CD4-positive, alpha-beta memory T cell (primary cell): ENCODE measurements at regions of chr17 and their contacts with region 1.

Region 1: GRCh38 chr17:48804925-48805411 is 12.1 kb downstream of the TTLL6 start:
- DNase-seq: peak; percentile 49 to 64 (median 55)
- H3K4me3 ChIP-seq: no peak overlapping the region
- H3K4me3 Mint-ChIP-seq: no peak overlapping the region
- H3K27ac ChIP-seq: no peak overlapping the region
- H3K27ac Mint-ChIP-seq: no peak overlapping the region
- H3K4me1 ChIP-seq: no peaks in the 10 kb centered on the region
- H3K4me1 Mint-ChIP-seq: no peaks in the 10 kb centered on the region
- H3K27me3 ChIP-seq: no peaks in the 10 kb centered on the region
- H3K27me3 Mint-ChIP-seq: peaks cover 0 to 10% of the 10 kb centered on the region in 2 donors

Region 2: DNA sequence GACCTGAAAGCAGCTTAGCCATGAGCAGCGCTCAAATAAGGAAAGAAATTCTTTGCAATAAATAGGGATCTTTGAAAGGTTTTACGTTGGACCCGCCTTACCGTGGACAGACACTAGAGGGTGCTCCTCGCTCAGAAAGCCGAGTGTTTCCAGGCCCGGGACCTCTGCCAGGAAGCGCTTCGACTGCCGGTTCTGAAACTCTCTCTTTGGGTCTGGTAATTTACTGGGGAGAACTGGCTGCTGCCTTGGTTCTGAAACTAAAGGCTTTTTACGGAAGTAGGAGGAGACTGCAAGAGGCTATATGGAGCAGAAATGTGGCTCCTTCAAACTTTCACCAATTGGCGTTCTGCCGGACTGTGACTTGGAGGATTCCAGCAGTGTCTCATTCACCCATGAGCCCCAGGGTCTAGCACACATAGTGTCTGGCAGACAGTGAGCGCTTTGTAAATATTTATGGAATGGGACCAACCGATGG is 133.2 kb before region 1 on chr17:
- CTCF ChIA-PET with region 1: interaction called, 3 read pairs
- POLR2A ChIA-PET with region 1: no interaction called
- intact Hi-C with region 1: loop called (anchors 2 kb)
- DNase-seq: peak; percentile 56 to 66 (median 60)
- H3K4me3 ChIP-seq: no peak overlapping the region
- H3K4me3 Mint-ChIP-seq: peak overlapping the region in 7 of 8 donors; percentile 17 to 78 (median 39)
- H3K27ac ChIP-seq: no peak overlapping the region
- H3K27ac Mint-ChIP-seq: no peak overlapping the region
- H3K4me1 ChIP-seq: no peaks in the 10 kb centered on the region
- H3K4me1 Mint-ChIP-seq: peaks cover 0 to 6% (median 3%) of the 10 kb centered on the region in 4 donors
- H3K27me3 ChIP-seq: no peaks in the 10 kb centered on the region
- H3K27me3 Mint-ChIP-seq: peaks cover 23 to 33% of the 10 kb centered on the region in 2 donors

Region 3: GRCh38 chr17:48767263-48767774 is 37.6 kb before region 1 on chr17:
- CTCF ChIA-PET with region 1: interaction called, 16 read pairs
- POLR2A ChIA-PET with region 1: no interaction called
- intact Hi-C with region 1: no loop called
- DNase-seq: no peak
- H3K4me3 ChIP-seq: no peak overlapping the region
- H3K4me3 Mint-ChIP-seq: no peak overlapping the region
- H3K27ac ChIP-seq: no peak overlapping the region
- H3K27ac Mint-ChIP-seq: no peak overlapping the region
- H3K4me1 ChIP-seq: no peaks in the 10 kb centered on the region
- H3K4me1 Mint-ChIP-seq: no peaks in the 10 kb centered on the region
- H3K27me3 ChIP-seq: no peaks in the 10 kb centered on the region
- H3K27me3 Mint-ChIP-seq: peaks cover 45 to 46% of the 10 kb centered on the region in 2 donors

Region 4: GRCh38 chr17:48791128-48792032 is 13.6 kb before region 1 on chr17:
- CTCF ChIA-PET with region 1: interaction called, 14 read pairs
- POLR2A ChIA-PET with region 1: no interaction called
- intact Hi-C with region 1: no loop called
- DNase-seq: peak in 1 of 5 donors; percentile 14
- H3K4me3 ChIP-seq: no peak overlapping the region
- H3K4me3 Mint-ChIP-seq: no peak overlapping the region
- H3K27ac ChIP-seq: no peak overlapping the region
- H3K27ac Mint-ChIP-seq: no peak overlapping the region
- H3K4me1 ChIP-seq: no peaks in the 10 kb centered on the region
- H3K4me1 Mint-ChIP-seq: no peaks in the 10 kb centered on the region
- H3K27me3 ChIP-seq: no peaks in the 10 kb centered on the region
- H3K27me3 Mint-ChIP-seq: peaks cover 23 to 49% of the 10 kb centered on the region in 2 donors

Region 5: DNA sequence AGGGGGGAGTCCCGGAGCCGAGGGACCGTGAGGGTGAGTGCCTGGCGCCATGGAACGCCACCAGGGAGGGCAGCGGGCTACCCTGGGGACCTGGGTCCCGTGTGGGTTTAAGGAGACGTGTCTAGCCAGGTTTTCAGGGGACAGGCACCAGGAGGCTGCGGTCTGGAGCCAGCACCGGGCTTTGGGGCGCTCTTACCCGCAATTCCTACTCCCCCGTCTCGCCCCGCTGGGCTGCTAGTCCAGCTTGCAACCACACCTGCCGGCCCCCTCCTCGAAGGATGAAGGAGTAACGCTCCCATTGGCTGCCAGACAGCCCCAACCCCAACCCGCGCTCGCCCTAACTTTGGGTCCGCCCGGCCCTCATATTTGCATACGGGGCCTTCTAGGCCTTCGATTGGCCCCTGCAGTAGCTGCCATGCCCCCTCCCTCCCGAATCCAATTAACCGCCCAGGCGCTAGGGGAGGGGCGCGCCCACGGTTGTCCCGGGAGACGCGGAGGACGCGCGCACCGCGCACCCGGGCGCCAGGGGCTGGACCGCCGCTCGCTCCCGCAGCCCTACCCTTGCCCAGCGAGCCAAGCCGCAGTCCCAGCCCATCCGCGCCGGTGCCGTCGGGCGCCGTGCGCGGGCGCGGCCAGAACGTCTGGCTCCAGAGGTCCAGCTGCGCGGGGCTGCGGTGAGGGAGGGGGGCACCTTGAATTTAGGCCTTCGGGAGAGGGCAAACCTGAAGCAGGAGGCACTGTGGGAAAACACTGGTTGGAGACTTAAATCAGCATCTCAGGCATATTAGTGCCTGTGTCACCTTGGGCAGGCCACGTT is 12.0 kb after region 1 on chr17 and contains the start of gene TTLL6:
- CTCF ChIA-PET with region 1: interaction called, 40 read pairs
- POLR2A ChIA-PET with region 1: no interaction called
- intact Hi-C with region 1: no loop called
- DNase-seq: peak; percentile 78 to 93 (median 81)
- H3K4me3 ChIP-seq: peak within 1 kb of the TSS; percentile 19 to 26
- H3K4me3 Mint-ChIP-seq: peak within 1 kb of the TSS; percentile 75 to 96 (median 88)
- H3K27ac ChIP-seq: no peak within 1 kb of the TSS
- H3K27ac Mint-ChIP-seq: peak within 1 kb of the TSS; percentile 14 to 79 (median 47)
- H3K4me1 ChIP-seq: peaks cover 20% of the 10 kb centered on the region
- H3K4me1 Mint-ChIP-seq: peaks cover 8 to 24% (median 18%) of the 10 kb centered on the region in 4 donors
- H3K27me3 ChIP-seq: peaks cover 4% of the 10 kb centered on the region
- H3K27me3 Mint-ChIP-seq: peaks cover 14 to 20% of the 10 kb centered on the region in 2 donors
- total RNA-seq, gene TTLL6: not detected

Region 6: GRCh38 chr17:49031965-49032928 is 227.3 kb after region 1 on chr17:
- CTCF ChIA-PET with region 1: no interaction called
- POLR2A ChIA-PET with region 1: no interaction called
- intact Hi-C with region 1: loop called (anchors 1 kb)
- DNase-seq: peak; percentile 41 to 56 (median 54)
- H3K4me3 ChIP-seq: no peak overlapping the region
- H3K4me3 Mint-ChIP-seq: no peak overlapping the region
- H3K27ac ChIP-seq: no peak overlapping the region
- H3K27ac Mint-ChIP-seq: no peak overlapping the region
- H3K4me1 ChIP-seq: peaks cover 3% of the 10 kb centered on the region
- H3K4me1 Mint-ChIP-seq: peaks cover 0 to 7% (median 2%) of the 10 kb centered on the region in 4 donors
- H3K27me3 ChIP-seq: no peaks in the 10 kb centered on the region
- H3K27me3 Mint-ChIP-seq: peaks cover 11 to 12% of the 10 kb centered on the region in 2 donors